Activated B cell treated with CpG ODN at 0.5 μM for 24 hours (primary cell): ENCODE measurements at regions of chr22 and their contacts with region 1.

Region 1: DNA sequence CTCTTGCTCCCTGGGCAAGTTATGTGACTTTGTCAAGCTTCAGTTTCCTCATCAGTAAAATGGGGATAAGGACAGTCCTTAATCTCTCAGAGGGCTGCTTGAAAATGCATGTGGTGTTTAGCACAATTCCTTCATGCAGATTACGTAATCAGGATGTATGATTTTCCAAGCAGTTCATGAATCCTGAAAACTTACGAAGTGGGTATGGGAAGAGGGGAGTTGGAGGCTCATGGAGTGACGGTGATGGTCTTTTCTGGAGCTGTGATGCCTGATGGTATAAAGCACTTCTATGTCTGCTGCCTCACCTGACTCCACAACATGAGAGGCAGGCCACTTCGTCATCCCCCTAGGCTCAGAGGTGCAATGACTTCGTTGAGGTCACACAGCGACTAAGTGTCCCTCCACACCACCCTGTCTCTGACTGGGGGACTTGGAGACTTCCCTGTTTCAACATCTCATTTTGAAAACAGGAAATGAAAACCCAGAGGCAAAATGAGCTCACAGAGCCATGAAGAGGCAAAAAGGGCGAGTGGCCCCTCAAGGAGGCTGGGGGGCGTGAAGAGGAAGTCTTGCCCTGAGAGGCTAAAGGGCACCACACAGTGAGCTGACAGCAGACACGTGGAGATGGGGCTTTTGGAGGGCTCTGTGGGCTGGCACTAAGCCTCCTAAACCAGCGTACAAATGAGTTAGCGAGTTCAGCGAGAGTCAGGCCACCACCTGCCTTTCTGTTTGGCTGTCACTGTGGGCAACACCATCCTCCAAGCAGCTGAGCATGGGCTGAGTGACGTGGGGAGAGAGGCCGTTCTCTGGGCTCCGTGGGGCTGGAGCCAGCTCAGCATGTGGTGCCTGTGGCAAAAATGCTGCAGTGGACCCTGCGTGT is 10.1 kb downstream of the MCM5 start:
- DNase-seq: peak; percentile 76
- ATAC-seq: peak; percentile 88
- H3K4me3 Mint-ChIP-seq: peak overlapping the region; percentile 82
- H3K27ac Mint-ChIP-seq: peak overlapping the region; percentile 96
- H3K4me1 Mint-ChIP-seq: peaks cover 42% of the 10 kb centered on the region
- H3K27me3 Mint-ChIP-seq: no peaks in the 10 kb centered on the region
- CTCF ChIP-seq: no peak

Region 2: DNA sequence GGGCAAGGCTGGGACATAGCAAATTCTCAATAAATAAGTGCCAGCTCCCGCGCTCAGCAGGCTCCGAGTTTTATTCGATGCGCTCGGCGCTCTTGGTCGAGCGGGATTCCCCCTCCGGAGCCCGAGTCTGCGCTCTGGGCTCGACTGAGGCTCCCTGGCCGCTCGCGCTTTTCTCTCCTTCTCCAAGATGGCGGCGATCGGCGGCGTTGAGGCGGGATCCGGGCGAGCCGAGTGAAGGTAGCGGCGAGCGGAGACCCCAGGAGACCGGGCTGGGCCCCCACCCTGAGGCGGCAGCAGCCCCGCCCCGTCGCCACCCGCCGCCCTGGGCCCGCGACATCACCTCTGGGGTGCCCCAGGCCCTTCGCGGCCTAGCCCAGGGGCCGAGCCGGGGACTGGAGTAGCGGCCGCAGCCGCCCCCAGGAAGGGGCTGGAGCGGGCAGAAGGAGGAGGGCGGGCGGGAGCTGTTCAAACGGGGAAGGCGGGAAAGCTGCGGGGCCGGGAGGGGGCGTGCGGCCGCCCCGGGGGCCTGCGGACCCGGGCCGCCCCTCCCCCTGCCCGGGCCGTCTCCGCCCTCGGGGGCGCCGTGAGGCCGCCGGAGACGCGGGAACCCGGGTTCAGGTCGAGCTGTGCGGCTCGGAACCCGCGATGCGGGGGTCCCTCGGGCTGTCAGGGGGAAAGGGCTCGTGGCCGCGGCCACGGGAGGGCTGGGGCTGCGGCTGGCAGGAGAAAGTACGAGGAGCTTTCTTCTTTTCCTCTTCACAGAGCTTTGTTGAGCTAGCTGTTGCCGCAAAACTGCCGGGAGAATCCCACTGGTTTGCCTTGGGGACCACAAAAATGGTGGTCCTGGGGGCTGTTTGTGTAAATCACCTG is 152.5 kb before region 1 on chr22 and contains the start of gene HMGXB4:
- CTCF ChIA-PET with region 1: no interaction called
- POLR2A ChIA-PET with region 1: interaction called, 16 read pairs
- intact Hi-C with region 1: loop called (anchors 1 kb)
- DNase-seq: peak; percentile 85
- ATAC-seq: peak; percentile 91
- H3K4me3 Mint-ChIP-seq: peak within 1 kb of the TSS; percentile 89
- H3K27ac Mint-ChIP-seq: peak within 1 kb of the TSS; percentile 84
- H3K4me1 Mint-ChIP-seq: peaks cover 20% of the 10 kb centered on the region
- H3K27me3 Mint-ChIP-seq: no peaks in the 10 kb centered on the region
- CTCF ChIP-seq: no peak
- total RNA-seq, gene HMGXB4: 22.5 and 24.8 TPM in 2 replicates

Region 3: DNA sequence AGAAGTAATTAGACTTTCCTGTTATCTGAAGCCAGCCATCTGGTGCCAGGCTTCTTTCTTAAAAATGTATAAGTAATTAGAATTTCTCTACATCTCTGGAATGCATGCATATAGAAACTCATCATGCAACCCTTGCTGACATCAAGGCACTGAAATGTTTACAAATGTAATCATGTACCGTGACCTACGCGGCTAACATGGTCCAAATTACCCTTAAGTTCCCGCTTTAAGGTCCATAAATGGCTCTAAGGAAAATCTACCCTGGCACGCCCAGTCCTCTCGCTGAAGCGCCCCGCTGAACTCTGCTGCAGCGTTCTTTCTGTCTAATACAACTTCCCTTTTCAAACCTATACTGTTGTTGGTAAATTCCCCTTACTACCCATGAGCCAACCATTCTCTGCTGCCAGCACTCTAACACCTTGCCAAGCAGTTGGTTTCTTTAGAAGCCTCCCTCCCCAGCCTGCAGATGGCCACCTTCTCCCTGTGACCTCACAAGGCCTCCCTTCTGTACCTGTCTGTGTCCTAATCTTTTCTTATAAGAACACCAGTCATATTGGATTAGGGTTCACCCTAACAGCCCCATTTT is 42.6 kb before region 1 on chr22:
- CTCF ChIA-PET with region 1: interaction called, 13 read pairs
- POLR2A ChIA-PET with region 1: interaction called, 36 read pairs
- intact Hi-C with region 1: loop called (anchors 1 kb)
- DNase-seq: peak; percentile 49
- ATAC-seq: peak; percentile 95
- H3K4me3 Mint-ChIP-seq: peak overlapping the region; percentile 45
- H3K27ac Mint-ChIP-seq: peak overlapping the region; percentile 88
- H3K4me1 Mint-ChIP-seq: peaks cover 60% of the 10 kb centered on the region
- H3K27me3 Mint-ChIP-seq: no peaks in the 10 kb centered on the region
- CTCF ChIP-seq: no peak

Region 4: GRCh38 chr22:35399678-35400334 is 10.2 kb before region 1 on chr22 and contains the start of gene MCM5:
- CTCF ChIA-PET with region 1: interaction called, 12 read pairs
- POLR2A ChIA-PET with region 1: interaction called, 43 read pairs
- intact Hi-C with region 1: loop called (anchors 1 kb)
- DNase-seq: peak; percentile 87
- ATAC-seq: peak; percentile 96
- H3K4me3 Mint-ChIP-seq: peak within 1 kb of the TSS; percentile 99
- H3K27ac Mint-ChIP-seq: peak within 1 kb of the TSS; percentile 99
- H3K4me1 Mint-ChIP-seq: peaks cover 57% of the 10 kb centered on the region
- H3K27me3 Mint-ChIP-seq: no peaks in the 10 kb centered on the region
- CTCF ChIP-seq: no peak
- total RNA-seq, gene MCM5: 176 and 178 TPM in 2 replicates

Region 5: DNA sequence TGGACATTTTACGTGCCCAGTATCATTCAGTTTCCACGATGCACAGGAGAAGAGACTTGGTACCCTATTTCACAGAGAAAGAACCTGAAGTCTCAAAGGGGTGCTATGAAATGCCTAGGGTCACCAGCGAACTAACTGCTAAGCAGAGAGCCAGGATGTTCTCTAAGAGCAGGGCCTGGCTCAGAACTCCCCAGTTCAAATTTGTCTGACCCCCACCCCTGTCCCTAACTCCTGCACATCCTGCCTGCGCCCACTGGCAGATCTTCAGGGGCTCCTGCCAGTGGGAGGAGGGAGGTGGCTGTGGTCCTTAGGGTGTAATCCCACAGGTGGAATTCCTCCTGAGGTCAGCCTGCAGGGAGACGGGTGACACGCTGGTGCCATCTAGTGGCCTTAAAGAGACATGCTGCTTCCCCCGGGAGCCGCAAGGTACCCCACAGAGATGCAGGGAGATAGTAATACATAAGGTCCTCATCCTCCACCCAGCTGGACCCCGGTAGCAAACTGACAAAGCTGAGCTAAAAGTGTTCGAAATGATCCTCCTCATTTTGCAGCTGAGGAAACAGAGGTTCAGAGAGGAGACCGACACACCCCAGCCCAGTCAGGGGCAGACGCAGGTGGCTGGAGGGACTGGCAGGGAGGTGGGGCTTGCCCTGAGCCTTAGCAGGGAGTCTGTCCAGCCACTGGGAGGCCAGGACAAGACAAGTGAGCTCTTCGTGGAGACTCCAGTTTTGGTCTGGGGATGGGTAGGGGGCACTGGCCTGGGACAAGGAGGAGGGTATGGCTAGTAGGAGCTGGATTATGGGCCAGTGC is 173.0 kb after region 1 on chr22:
- CTCF ChIA-PET with region 1: interaction called, 6 read pairs
- POLR2A ChIA-PET with region 1: no interaction called
- intact Hi-C with region 1: loop called (anchors 1 kb)
- DNase-seq: peak; percentile 47
- ATAC-seq: peak; percentile 86
- H3K4me3 Mint-ChIP-seq: no peak overlapping the region
- H3K27ac Mint-ChIP-seq: no peak overlapping the region
- H3K4me1 Mint-ChIP-seq: peaks cover 4% of the 10 kb centered on the region
- H3K27me3 Mint-ChIP-seq: no peaks in the 10 kb centered on the region
- CTCF ChIP-seq: peak; percentile 45

Region 6: GRCh38 chr22:36160499-36160942 is 750.5 kb after region 1 on chr22 and contains the start of gene APOL3:
- CTCF ChIA-PET with region 1: no interaction called
- POLR2A ChIA-PET with region 1: no interaction called
- intact Hi-C with region 1: loop called (anchors 5 kb)
- DNase-seq: no peak
- ATAC-seq: peak; percentile 45
- H3K4me3 Mint-ChIP-seq: peak within 1 kb of the TSS; percentile 85
- H3K27ac Mint-ChIP-seq: peak within 1 kb of the TSS; percentile 95
- H3K4me1 Mint-ChIP-seq: peaks cover 92% of the 10 kb centered on the region
- H3K27me3 Mint-ChIP-seq: no peaks in the 10 kb centered on the region
- CTCF ChIP-seq: no peak
- total RNA-seq, gene APOL3: 32.2 and 38.4 TPM in 2 replicates